Activated CD4-positive, alpha-beta memory T cell treated with anti-CD3 and anti-CD28 coated beads for 36 hours (primary cell): ENCODE measurements at regions of chr9 and their contacts with region 1.

Region 1: DNA sequence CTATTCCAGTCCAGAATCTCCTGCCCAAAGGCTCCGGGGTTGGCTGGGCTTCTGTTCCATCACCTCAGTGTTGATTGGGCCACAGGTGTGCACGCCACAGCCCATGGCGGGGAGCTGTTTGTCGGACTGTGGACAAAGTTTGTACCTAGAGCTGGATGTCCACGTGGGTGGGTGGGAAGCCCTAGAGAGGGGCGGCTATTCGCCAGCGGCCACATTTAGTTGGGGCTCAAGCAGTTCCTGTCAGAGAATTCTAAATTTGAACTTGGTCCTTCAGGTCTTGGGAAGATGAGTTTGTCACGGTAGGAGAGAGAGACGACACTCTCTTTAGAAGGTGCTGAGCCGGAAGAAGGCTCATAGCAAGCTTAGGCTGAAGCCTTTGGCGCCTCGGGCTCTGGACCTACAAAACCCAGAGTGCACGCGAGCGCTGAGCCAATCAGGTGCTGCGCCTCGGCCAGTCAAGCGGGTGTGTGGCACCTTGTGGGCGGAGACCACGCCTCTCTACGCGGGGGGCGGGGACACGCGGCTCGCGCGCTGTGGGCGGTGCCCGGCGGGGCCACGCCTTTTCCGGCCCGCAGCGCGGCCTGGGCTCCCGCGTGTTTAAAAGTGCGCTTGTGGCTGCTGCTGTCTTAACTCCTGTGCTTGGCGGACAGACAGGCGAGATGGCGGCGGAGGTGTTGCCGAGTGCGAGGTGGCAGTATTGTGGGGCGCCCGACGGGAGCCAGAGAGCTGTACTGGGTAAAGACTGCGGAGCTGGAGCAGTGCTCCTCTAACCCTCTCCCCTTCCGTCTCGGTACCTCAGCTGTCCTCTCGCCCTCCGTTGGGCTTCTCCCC is at the start of gene POLR1E:
- DNase-seq: peak; percentile 97
- H3K4me3 Mint-ChIP-seq: peak within 1 kb of the TSS; percentile 88
- H3K27ac Mint-ChIP-seq: peak within 1 kb of the TSS; percentile 91
- H3K4me1 Mint-ChIP-seq: peaks cover 35% of the 10 kb centered on the region
- H3K27me3 Mint-ChIP-seq: peaks cover 6% of the 10 kb centered on the region
- total RNA-seq, gene POLR1E: 56.7 to 58.0 TPM

Region 2: GRCh38 chr9:37528652-37529510 is 43.3 kb after region 1 on chr9:
- CTCF ChIA-PET with region 1: no interaction called
- POLR2A ChIA-PET with region 1: no interaction called
- intact Hi-C with region 1: loop called (anchors 1 kb)
- DNase-seq: peak; percentile 93
- H3K4me3 Mint-ChIP-seq: peak overlapping the region; percentile 71
- H3K27ac Mint-ChIP-seq: peak overlapping the region; percentile 94
- H3K4me1 Mint-ChIP-seq: peaks cover 42% of the 10 kb centered on the region
- H3K27me3 Mint-ChIP-seq: no peaks in the 10 kb centered on the region

Region 3: GRCh38 chr9:37784616-37785483 is 299.2 kb after region 1 on chr9 and contains the start of gene EXOSC3:
- CTCF ChIA-PET with region 1: no interaction called
- POLR2A ChIA-PET with region 1: no interaction called
- intact Hi-C with region 1: loop called (anchors 1 kb)
- DNase-seq: peak; percentile 93
- H3K4me3 Mint-ChIP-seq: peak within 1 kb of the TSS; percentile 98
- H3K27ac Mint-ChIP-seq: peak within 1 kb of the TSS; percentile 93
- H3K4me1 Mint-ChIP-seq: peaks cover 38% of the 10 kb centered on the region
- H3K27me3 Mint-ChIP-seq: no peaks in the 10 kb centered on the region
- total RNA-seq, gene EXOSC3: 97.5 to 97.9 TPM

Region 4: GRCh38 chr9:38068866-38069629 is 583.4 kb after region 1 on chr9 and contains the start of gene SHB:
- CTCF ChIA-PET with region 1: no interaction called
- POLR2A ChIA-PET with region 1: no interaction called
- intact Hi-C with region 1: loop called (anchors 5 kb)
- DNase-seq: peak; percentile 85
- H3K4me3 Mint-ChIP-seq: peak within 1 kb of the TSS; percentile 68
- H3K27ac Mint-ChIP-seq: no peak within 1 kb of the TSS
- H3K4me1 Mint-ChIP-seq: peaks cover 19% of the 10 kb centered on the region
- H3K27me3 Mint-ChIP-seq: peaks cover 6% of the 10 kb centered on the region
- total RNA-seq, gene SHB: 1.1 to 1.2 TPM